Dendritic cell treated with granulocyte-macrophage colony-stimulating factor and Interleukin-4, amounts not matched to agents 40 ng/mL and 50 ng/mL, for 4 days (primary cell): ENCODE measurements at regions of chr1 and their contacts with region 1.

Region 1: DNA sequence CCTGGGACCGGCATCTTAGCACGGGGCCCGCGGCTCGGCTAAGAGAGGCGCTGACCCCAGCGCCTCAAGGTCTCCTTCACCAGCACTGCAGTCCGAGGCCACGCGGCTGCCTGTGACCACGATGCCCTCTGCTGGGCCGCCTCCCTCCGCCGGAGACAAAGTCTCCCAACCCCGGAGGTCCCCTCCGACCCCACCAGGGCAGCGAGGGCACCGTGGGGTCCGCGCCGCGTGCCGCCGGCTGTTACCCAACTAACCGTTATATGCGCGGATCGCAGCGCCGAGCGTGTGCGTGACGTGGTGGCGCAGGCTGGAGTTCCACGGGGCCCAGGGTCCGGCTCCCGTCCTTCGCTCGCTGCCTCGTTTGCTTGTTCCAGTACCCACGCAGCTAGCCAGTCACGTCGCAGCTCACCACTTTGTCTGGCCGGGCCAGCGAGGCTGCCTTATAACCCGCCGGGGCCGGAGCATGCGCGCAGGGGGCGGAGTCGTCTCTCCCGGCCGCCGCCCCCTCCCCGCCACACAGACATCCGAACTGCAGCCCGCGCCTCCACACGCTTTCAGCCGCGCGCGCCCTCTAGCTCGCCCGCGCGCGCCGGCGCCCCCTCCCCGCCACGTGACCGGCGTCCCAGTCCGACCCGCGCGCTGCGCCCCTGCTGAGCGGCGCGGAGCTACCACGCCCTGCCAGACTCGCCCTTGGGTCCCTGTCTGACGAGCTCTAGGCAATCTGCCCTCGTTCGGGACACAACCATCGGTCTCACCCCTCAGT is at the start of gene SLC16A1:
- H3K4me3 Mint-ChIP-seq: peak within 1 kb of the TSS; percentile 94
- H3K27ac Mint-ChIP-seq: peak within 1 kb of the TSS; percentile 98
- H3K4me1 Mint-ChIP-seq: peaks cover 56% of the 10 kb centered on the region
- H3K27me3 Mint-ChIP-seq: no peaks in the 10 kb centered on the region

Region 2: GRCh38 chr1:112809253-112809684 is 146.7 kb before region 1 on chr1:
- intact Hi-C with region 1: loop called (anchors 1 kb)
- H3K4me3 Mint-ChIP-seq: no peak overlapping the region
- H3K27ac Mint-ChIP-seq: no peak overlapping the region
- H3K4me1 Mint-ChIP-seq: peaks cover 17% of the 10 kb centered on the region
- H3K27me3 Mint-ChIP-seq: peaks cover 39% of the 10 kb centered on the region

Region 3: DNA sequence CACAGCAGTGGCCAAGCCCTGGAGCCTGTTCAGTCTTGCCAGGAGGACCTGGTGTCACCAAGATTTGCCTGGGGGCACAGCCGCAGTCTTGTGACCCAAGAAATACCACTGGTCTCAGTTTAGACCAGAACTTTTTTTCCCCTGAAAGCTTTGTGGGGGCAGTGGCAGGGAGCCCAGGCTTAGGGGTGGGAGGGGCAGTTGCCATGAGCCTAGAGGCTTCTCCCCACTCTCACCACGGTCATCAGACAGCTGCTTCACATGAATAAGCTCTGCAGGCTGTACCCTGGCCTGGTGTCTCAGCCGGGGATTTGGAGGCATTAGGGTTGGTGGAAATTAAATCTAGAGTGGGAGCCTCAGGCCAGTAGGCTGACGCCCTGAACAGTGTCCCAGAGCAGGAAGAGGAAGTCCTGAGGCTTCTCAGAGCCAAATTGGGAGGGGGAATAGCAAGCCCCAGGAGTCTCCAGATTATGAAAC is 73.7 kb before region 1 on chr1:
- intact Hi-C with region 1: loop called (anchors 1 kb)
- H3K4me3 Mint-ChIP-seq: peak overlapping the region; percentile 43
- H3K27ac Mint-ChIP-seq: peak overlapping the region; percentile 98
- H3K4me1 Mint-ChIP-seq: peaks cover 42% of the 10 kb centered on the region
- H3K27me3 Mint-ChIP-seq: peaks cover 10% of the 10 kb centered on the region

Region 4: DNA sequence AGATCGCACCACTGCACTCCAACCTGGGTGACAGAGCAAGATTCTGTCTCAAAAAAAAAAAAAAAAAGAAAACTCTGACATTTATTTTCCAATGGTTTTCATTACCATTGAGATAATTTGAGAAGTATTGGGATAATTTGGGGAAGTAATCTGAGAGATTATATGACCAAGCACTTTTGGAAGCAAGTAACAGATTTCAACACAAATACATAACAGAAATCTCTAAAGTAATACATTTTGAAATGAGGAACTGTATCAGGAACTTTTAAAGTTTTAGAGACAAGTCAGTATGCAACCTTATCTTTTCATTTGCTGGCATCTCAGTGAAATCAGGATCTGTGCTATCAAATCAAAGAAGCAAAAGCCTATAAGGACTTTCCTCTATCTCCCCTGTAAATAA is 25.5 kb after region 1 on chr1:
- intact Hi-C with region 1: loop called (anchors 2 kb)
- H3K4me3 Mint-ChIP-seq: no peak overlapping the region
- H3K27ac Mint-ChIP-seq: peak overlapping the region; percentile 84
- H3K4me1 Mint-ChIP-seq: peaks cover 39% of the 10 kb centered on the region
- H3K27me3 Mint-ChIP-seq: no peaks in the 10 kb centered on the region

Region 5: DNA sequence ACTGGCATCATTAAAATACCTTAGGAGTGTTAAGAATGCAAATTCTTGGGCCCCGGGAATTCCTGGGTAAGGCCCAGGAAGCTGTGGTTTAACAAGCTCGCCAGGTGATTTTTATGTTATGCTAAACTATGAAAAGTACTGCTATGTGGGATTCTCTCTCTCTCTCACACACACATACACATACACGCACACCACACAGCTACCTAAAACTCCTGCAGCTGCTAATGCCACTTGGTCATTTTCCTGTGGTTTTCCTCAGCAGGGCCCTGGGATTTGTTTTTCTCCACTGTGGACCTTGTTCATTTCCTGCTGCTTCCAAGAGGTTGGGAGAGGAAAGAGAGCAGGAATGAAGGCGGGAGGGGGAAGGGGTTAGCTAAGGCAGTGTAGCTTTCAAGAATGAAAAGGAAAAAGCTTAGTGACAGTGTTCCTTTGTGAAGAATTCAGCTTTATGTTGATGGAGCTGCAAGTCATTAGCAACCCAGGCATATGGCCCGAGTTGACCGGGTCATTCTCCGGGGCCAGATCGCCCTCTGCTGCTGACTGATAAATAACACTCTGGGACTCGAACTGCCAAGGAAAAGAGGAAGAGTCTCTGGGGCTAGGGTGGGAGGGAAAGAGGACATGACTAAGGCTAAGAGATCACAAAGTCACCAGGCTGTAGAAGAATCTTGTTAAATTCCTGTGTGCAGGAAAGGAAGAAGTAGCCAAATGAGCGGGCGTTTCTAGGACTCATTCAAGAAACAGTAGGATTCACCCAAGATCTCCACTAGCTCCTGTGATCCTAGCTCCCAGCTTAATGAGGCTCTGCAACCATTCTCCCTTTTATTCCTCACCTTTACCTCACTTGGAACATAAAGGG is 86.6 kb after region 1 on chr1:
- intact Hi-C with region 1: loop called (anchors 2 kb)
- H3K4me3 Mint-ChIP-seq: no peak overlapping the region
- H3K27ac Mint-ChIP-seq: peak overlapping the region; percentile 80
- H3K4me1 Mint-ChIP-seq: peaks cover 42% of the 10 kb centered on the region
- H3K27me3 Mint-ChIP-seq: peaks cover 2% of the 10 kb centered on the region

Region 6: DNA sequence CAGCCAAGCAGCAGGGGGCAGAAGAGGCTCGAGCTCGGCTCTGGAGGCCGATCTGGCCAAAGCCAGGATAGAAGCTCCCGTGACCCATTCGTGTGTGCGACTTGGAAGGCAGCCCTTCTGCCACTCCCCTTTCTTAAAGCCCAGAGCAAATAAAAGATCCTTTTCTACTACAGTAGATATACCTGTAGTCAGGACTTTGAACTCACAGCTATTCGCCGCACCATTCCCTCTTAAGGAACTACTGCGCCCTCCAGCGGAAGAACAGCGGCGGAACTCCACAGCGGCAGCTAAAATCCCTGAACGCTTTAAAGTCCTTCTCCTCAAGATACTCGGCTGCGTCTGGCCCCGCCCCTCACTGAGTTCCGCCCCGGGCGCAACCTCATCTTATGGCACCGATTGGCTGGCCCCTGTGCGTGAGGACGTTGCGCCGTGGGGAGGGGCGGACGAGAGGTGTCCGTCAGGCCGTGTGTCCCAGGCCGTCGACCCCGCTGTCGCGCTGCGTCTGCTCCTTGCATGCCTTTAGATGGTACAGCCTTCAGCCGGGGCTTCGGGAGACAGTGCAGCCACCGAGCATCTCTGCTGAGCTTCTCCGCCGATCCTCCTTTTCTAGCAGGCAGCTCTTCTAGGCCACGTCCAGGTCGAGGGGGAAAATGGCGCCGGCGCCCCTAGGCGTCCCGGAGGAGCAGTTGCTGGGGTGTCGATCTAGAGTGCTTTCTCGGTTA is 117.0 kb after region 1 on chr1 and contains the start of gene LRIG2:
- intact Hi-C with region 1: loop called (anchors 5 kb)
- H3K4me3 Mint-ChIP-seq: peak within 1 kb of the TSS; percentile 92
- H3K27ac Mint-ChIP-seq: peak within 1 kb of the TSS; percentile 96
- H3K4me1 Mint-ChIP-seq: peaks cover 26% of the 10 kb centered on the region
- H3K27me3 Mint-ChIP-seq: no peaks in the 10 kb centered on the region